A549 (cell line): ENCODE measurements at regions of chr15 and their contacts with region 1.

Region 1: DNA sequence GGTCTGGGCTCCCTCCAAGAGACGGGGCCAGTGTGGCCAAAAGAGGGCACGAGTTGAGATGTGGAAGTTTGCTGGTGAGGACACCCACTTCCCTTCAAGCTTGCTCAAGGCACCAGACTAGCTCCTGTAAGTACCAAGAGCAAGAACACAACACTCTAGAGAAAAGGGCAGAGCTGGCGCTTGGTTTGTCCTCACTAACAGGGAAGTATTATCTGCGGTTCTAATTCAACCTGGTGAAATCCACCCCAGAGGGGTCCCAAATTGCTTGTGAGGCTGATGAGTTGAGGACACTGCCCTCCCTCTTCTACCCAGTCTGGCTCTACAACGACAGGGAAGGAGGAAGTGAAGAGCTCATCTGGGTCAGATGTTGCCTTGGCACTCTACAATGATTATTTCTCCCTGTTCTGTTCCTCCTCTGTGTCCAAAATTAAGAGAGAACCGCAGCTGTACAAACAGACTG is 16.9 kb upstream of the FSIP1 start:
- DNase-seq: no peak
- ATAC-seq: no peak
- H3K4me3 ChIP-seq: no peak overlapping the region
- H3K27ac ChIP-seq: no peak overlapping the region
- H3K4me1 ChIP-seq: no peaks in the 10 kb centered on the region
- CTCF ChIP-seq: no peak
- EP300 ChIP-seq: no peak
- POLR2A ChIP-seq: no peak
- RAD21 ChIP-seq: no peak

Region 2: GRCh38 chr15:39786447-39787056 is 13.0 kb before region 1 on chr15:
- CTCF ChIA-PET with region 1: interaction called, 15 read pairs
- POLR2A ChIA-PET with region 1: no interaction called
- DNase-seq: peak; percentile 21 to 44
- ATAC-seq: no peak
- H3K4me3 ChIP-seq: no peak overlapping the region
- H3K27ac ChIP-seq: no peak overlapping the region
- H3K4me1 ChIP-seq: peaks cover 15% of the 10 kb centered on the region; the same call in 2 of the 3 replicates
- CTCF ChIP-seq: peak; percentile 63
- EP300 ChIP-seq: no peak
- POLR2A ChIP-seq: no peak
- RAD21 ChIP-seq: peak; percentile 61 to 69